ENCODE measurements at regions of chr5 and their contacts with region 1.

Region 1: GRCh38 chr5:138425079-138425478 is 13.8 kb upstream of the REEP2 start:
- DNase-seq: no peak
- ATAC-seq: no peak
- H3K4me3 ChIP-seq: no peak overlapping the region
- H3K4me3 Mint-ChIP-seq: no peak overlapping the region
- H3K27ac ChIP-seq: no peak overlapping the region
- H3K27ac Mint-ChIP-seq: no peak overlapping the region
- H3K4me1 ChIP-seq: no peaks in the 10 kb centered on the region
- H3K4me1 Mint-ChIP-seq: no peaks in the 10 kb centered on the region
- H3K27me3 ChIP-seq: no peaks in the 10 kb centered on the region
- H3K27me3 Mint-ChIP-seq: no peaks in the 10 kb centered on the region

Region 2: GRCh38 chr5:138449501-138450239 is 24.6 kb after region 1 on chr5:
- CTCF ChIA-PET with region 1: no interaction called
- POLR2A ChIA-PET with region 1: no interaction called
- DNase-seq: peak; percentile 15 to 86 (median 62)
- ATAC-seq: peak; percentile 76 to 93 (median 86)
- H3K4me3 ChIP-seq: no peak overlapping the region
- H3K4me3 Mint-ChIP-seq: no peak overlapping the region
- H3K27ac ChIP-seq: no peak overlapping the region
- H3K27ac Mint-ChIP-seq: peak overlapping the region in 1 of 2 donors; percentile 52
- H3K4me1 ChIP-seq: peaks cover 3 to 12% of the 10 kb centered on the region in 2 experiments
- H3K4me1 Mint-ChIP-seq: peaks cover 5 to 8% (median 5%) of the 10 kb centered on the region in 3 donors
- H3K27me3 ChIP-seq: peaks cover 0 to 29% of the 10 kb centered on the region in 2 experiments
- H3K27me3 Mint-ChIP-seq: no peaks in the 10 kb centered on the region

Region 3: GRCh38 chr5:138956801-138957200 is 531.7 kb after region 1 on chr5:
- CTCF ChIA-PET with region 1: no interaction called
- POLR2A ChIA-PET with region 1: interaction called in 1 of 2 experiments, 10 read pairs
- DNase-seq: no peak
- ATAC-seq: no peak
- H3K4me3 ChIP-seq: no peak overlapping the region
- H3K4me3 Mint-ChIP-seq: no peak overlapping the region
- H3K27ac ChIP-seq: no peak overlapping the region
- H3K27ac Mint-ChIP-seq: no peak overlapping the region
- H3K4me1 ChIP-seq: peaks cover 4 to 18% of the 10 kb centered on the region in 2 experiments
- H3K4me1 Mint-ChIP-seq: peaks cover 16 to 23% (median 20%) of the 10 kb centered on the region in 3 donors
- H3K27me3 ChIP-seq: no peaks in the 10 kb centered on the region
- H3K27me3 Mint-ChIP-seq: no peaks in the 10 kb centered on the region